Left ventricle myocardium inferior (tissue), 1 donor: ENCODE measurements at regions of chr6 and their contacts with region 1.

Region 1: GRCh38 chr6:25278914-25279747 is at the start of gene CARMIL1:
- DNase-seq: peak; percentile 73
- H3K4me3 ChIP-seq: peak within 1 kb of the TSS; percentile 76
- H3K27ac ChIP-seq: peak within 1 kb of the TSS; percentile 73
- H3K4me1 ChIP-seq: peaks cover 30% of the 10 kb centered on the region
- H3K27me3 ChIP-seq: peaks cover 26% of the 10 kb centered on the region
- CTCF ChIP-seq: peak; percentile 78
- total RNA-seq, gene CARMIL1: 8.4 TPM

Region 2: GRCh38 chr6:25342802-25343201 is 63.7 kb after region 1 on chr6:
- intact Hi-C with region 1: no loop called
- DNase-seq: no peak
- H3K4me3 ChIP-seq: no peak overlapping the region
- H3K27ac ChIP-seq: no peak overlapping the region
- H3K4me1 ChIP-seq: no peaks in the 10 kb centered on the region
- H3K27me3 ChIP-seq: no peaks in the 10 kb centered on the region
- CTCF ChIP-seq: no peak

Region 3: DNA sequence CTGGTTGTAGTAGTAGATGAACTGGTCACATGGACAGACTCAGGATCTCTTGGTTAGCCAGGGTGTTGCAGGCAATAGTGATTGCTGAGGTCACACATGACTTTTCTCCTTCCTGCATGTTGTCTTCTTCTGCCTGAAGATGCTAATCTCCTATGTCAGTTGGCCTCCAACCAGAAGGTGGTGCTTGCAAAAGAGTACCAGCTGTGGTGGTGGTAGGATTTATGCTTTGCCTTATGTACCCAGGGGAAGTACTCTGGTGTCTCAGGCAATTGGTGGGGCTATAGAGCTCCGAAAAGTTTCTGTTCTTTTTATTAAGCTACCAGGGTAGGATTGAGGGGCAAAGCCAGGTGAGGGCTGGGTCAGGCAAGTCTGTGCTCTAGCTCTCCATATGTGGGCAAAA is 98.5 kb after region 1 on chr6:
- intact Hi-C with region 1: no loop called
- DNase-seq: no peak
- H3K4me3 ChIP-seq: no peak overlapping the region
- H3K27ac ChIP-seq: no peak overlapping the region
- H3K4me1 ChIP-seq: no peaks in the 10 kb centered on the region
- H3K27me3 ChIP-seq: no peaks in the 10 kb centered on the region
- CTCF ChIP-seq: no peak

Region 4: GRCh38 chr6:25490018-25490801 is 211.1 kb after region 1 on chr6:
- intact Hi-C with region 1: loop called (anchors 5 kb)
- DNase-seq: peak; percentile 53
- H3K4me3 ChIP-seq: no peak overlapping the region
- H3K27ac ChIP-seq: peak overlapping the region; percentile 39
- H3K4me1 ChIP-seq: peaks cover 35% of the 10 kb centered on the region
- H3K27me3 ChIP-seq: no peaks in the 10 kb centered on the region
- CTCF ChIP-seq: peak; percentile 83